AG04450 (cell line): ENCODE measurements at regions of chr14 and their contacts with region 1.

Region 1: GRCh38 chr14:67704484-67705089 is 2.9 kb downstream of the RDH12 start:
- DNase-seq: no peak
- H3K4me3 ChIP-seq: no peak overlapping the region
- H3K27ac ChIP-seq: no peak overlapping the region
- H3K27me3 ChIP-seq: peaks cover 4% of the 10 kb centered on the region
- CTCF ChIP-seq: peak; percentile 77

Region 2: DNA sequence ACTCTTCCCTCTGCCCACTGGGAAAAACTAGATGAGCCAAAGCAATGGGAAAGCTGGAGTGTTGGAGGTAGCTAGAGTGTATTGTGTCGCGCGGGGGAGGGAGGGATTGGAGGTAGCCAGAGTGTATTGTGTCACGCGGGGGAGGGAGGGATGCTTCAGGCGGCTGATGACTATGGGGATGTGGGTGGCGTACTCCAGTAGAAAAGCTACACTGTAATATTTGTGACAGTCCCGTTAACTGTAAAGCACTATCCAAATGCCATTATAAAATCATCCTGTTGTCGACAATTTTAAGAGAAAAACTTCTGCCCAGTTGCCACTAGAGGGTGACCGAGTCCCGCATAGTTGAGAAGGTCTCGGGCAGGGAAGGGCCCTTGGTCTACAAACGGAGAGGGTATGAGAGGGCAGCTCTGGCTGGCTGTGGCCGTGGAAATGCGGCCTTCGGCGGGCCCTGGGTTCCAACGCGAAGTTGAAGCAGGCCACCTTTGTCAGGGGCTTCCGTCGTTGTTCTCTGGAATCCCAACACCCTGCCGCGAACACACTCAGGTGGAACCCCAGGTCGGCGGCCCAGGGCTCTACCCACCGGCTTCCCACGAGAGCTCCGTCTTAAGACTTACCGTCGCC is 277.5 kb before region 1 on chr14:
- CTCF ChIA-PET with region 1: interaction called, 42 read pairs
- POLR2A ChIA-PET with region 1: no interaction called
- DNase-seq: peak; percentile 45
- H3K4me3 ChIP-seq: no peak overlapping the region
- H3K27ac ChIP-seq: no peak overlapping the region
- H3K27me3 ChIP-seq: peaks cover 10% of the 10 kb centered on the region
- CTCF ChIP-seq: peak; percentile 86

Region 3: DNA sequence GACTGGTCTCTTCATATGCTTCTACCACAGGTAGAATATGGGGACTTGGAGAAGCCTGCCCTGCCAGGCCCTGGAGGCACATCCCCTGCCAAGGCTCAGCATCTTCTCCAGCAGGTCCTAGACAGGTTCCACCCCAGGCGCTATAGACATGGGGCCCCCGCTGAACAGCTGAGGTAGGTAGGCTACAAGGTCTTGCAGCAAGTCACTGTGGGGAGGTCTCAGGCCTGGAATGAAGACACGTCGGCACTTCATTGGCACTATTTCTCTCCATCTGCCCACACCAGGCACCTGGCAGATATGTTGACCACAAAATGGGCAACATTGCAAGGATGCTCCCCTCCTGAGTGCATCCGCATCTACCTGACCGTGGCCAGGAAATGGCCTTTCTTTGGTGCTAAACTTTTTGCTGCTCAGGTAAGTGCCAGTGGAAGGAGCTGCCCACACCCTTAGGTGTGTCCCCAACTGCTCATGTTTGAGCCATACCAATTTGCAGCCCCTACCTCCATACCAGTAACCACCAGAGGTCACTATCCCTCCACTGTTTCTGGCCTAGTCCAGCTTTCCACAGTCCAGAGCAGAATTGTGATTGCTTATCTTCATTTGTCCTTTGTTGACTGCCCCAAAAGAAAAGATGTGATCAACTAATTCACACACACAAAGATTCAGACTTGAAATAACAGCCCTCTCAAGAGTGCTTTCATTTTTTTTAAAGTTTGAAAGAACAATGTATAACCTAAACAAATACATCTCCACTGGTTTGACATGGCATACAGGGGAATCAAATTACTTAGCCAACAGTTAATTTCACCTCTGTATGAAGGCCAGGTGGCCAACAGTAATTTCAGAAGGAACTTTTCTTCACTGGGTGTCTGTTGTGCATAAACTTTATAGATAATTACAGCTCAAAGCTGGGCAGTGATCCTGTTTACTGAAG is 120.6 kb before region 1 on chr14:
- CTCF ChIA-PET with region 1: interaction called, 208 read pairs
- POLR2A ChIA-PET with region 1: no interaction called
- DNase-seq: no peak
- H3K4me3 ChIP-seq: no peak overlapping the region
- H3K27ac ChIP-seq: no peak overlapping the region
- H3K27me3 ChIP-seq: peaks cover 5% of the 10 kb centered on the region
- CTCF ChIP-seq: peak; percentile 85

Region 4: DNA sequence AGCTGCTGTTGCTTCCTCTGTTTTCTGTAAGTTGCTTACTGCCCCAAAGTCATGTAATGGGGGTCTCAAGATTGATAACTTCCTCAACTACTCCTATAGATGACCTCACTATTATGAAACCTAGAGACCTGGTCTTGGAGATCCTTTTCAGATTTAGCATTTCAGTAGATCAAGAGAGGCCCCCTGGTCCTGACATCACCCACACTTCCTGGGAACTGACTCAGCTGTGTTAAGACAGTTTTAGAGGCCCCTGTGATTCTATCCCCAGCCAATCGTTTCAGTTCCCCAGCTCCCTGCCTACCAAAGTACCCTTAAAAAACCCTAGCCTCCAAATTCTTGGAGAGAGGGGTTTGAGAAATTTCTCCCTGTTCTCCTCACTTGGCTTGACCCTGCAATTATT is 94.1 kb before region 1 on chr14:
- CTCF ChIA-PET with region 1: interaction called, 33 read pairs
- POLR2A ChIA-PET with region 1: no interaction called
- DNase-seq: no peak
- H3K4me3 ChIP-seq: no peak overlapping the region
- H3K27ac ChIP-seq: no peak overlapping the region
- H3K27me3 ChIP-seq: peaks cover 19% of the 10 kb centered on the region
- CTCF ChIP-seq: no peak

Region 5: DNA sequence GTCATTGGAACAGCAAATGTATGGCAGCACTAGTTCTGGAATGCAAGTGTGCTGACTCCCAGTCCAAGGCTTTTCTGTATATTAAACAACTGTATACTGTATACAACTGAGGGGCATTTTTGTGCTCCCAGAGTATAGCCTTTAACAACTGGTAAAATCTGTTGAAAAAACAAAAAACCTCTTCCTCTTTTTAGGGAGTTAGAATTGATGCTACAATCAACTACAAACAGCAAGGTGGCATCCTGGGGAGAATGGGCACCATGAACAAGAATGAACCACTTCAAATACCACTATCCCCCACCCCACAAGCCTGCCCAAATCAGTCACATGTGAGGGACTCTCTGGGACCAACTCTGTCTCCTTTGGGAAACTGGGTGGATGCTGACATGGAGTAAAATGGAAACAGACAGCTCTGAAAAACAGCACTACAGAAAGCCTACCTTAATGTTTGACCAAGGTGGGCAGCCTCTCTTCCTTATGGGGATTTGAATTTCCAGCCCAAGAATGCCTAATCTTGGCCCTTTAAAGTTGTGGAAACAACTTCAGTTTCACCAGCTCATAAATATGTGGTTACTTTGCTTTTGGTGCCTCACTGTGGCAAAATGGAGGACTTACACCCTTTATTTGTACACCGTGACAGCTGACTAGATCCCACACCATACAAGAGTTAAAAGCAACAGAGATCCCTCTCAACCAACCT is 37.7 kb before region 1 on chr14:
- CTCF ChIA-PET with region 1: interaction called, 65 read pairs
- POLR2A ChIA-PET with region 1: no interaction called
- DNase-seq: peak; percentile 43
- H3K4me3 ChIP-seq: no peak overlapping the region
- H3K27ac ChIP-seq: no peak overlapping the region
- H3K27me3 ChIP-seq: no peaks in the 10 kb centered on the region
- CTCF ChIP-seq: peak; percentile 70

Region 6: DNA sequence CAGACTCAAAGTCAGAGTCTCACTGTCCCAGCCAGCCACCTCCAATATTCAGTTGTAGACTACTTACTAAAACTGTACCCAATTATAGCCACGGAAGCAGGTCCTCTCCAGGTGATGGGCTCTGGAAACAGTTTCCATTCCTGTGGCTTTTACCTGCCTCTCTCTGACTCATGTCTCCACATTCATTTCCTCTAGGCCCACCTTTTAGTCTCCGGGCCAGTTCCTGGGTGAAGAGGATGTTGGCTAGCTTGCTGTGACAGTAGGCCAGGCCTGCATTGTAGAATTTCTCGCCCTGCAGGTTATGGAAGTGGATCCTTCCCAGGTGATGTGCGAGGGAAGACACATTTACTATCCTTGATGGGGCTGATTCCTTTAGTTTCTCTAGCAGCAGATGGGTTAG is 14.6 kb before region 1 on chr14:
- CTCF ChIA-PET with region 1: interaction called, 52 read pairs
- POLR2A ChIA-PET with region 1: interaction called, 5 read pairs
- DNase-seq: no peak
- H3K4me3 ChIP-seq: no peak overlapping the region
- H3K27ac ChIP-seq: peak overlapping the region; percentile 21
- H3K27me3 ChIP-seq: no peaks in the 10 kb centered on the region
- CTCF ChIP-seq: no peak